Heart right ventricle (tissue), 16 donors: ENCODE measurements at regions of chr4 and their contacts with region 1.

Region 1: DNA sequence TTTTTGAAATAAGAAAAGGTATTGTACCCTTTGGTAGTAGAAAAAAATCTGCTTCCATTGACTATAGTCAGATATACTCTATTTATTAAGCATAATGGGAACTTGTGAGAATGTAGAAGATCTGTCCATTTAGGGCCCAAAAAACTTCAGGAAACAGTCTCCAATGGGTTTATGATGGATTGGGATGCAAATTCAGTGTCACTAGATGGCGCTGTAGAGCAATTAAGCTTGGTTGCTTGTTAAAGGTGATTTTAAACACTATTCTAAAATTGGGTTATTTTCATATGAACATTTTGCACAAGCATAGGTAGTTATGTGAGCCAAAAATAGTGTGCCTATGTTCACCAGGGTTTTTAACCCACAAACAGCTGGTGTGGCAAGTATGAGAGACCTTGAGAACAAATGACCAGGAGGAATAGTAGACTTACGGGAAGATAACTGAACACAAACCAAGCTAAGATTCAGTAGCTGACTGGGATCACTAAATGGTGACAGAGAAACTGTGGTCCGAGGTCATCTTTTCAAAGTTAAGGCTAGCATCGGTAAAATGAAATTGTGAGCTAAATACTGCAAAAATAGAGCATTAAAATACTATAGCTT is 80.3 kb upstream of the LSM6 start:
- DNase-seq: peak in 1 of 2 donors; percentile 27
- ATAC-seq: no peak
- H3K4me3 ChIP-seq: no peak overlapping the region
- H3K27ac ChIP-seq: no peak overlapping the region
- H3K4me1 ChIP-seq: no peaks in the 10 kb centered on the region
- H3K27me3 ChIP-seq: no peaks in the 10 kb centered on the region
- CTCF ChIP-seq: peak; percentile 33 to 75 (median 70)

Region 2: DNA sequence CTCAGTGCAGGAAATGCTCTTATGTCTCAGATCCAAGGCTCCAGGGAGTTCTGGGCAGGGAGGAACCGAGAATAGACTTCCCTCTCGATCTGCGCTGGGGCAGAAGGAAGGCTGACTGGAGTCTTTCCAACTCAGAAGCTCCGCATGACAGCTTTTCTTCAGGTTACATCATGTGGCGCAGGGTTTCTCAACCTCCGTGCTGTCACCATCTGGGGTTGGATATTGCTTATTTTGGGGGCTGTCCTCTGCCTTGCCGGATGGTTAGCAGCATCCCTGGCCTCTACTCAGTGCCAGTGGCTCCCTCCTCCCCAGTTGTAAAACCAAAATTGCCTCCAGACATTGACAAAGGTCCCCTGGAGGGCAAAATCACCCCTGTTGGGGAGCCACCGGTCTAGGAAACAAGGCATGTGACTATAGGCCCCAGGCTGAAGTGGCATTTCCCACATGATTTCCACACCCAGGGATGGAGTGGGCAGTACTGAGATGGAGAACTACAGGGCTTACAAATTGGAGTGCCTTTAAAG is 140.5 kb after region 1 on chr4:
- intact Hi-C with region 1: loop called in 1 of 10 experiments (anchors 10 kb)
- DNase-seq: no peak
- ATAC-seq: peak; percentile 53 to 70 (median 61)
- H3K4me3 ChIP-seq: no peak overlapping the region
- H3K27ac ChIP-seq: peak overlapping the region in 8 of 10 donors; percentile 7 to 66 (median 38)
- H3K4me1 ChIP-seq: peaks cover 0 to 38% (median 17%) of the 10 kb centered on the region in 9 donors
- H3K27me3 ChIP-seq: no peaks in the 10 kb centered on the region
- CTCF ChIP-seq: no peak

Region 3: DNA sequence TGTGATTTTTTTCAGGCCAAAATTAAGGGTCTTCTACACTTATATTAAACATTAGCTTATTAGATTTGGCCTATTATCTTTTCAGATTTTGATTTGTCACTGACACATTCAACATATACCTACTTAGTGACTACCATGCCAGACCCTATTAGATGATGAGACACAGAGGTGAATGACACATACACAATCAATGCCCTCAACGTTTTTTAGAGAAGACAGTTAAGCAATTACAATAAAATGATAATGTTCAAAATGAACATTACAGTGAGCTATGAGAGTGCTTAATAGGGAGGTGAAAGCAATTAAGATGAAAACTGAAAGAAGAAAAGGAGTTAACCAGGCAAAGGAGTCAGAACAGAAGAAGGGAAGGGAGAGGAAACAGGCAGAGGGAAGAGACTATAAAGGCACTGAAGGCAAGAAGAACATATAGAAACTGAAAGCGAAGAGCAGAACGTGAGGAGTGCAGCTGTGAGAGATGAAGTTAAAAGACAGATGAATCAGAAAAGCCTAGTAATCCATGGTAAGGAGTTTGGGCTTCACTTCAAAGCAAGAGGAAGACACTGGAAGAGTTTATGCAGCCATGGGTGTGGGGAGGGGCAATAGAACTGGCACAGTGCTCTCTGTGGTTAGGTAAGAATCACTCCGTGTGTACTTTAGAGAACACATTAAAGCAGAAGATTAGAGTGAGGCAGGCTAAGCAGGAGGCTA is 238.2 kb after region 1 on chr4:
- intact Hi-C with region 1: loop called in 4 of 10 experiments (anchors 2 to 10 kb)
- DNase-seq: no peak
- ATAC-seq: no peak
- H3K4me3 ChIP-seq: no peak overlapping the region
- H3K27ac ChIP-seq: no peak overlapping the region
- H3K4me1 ChIP-seq: peaks cover 0 to 49% (median 3%) of the 10 kb centered on the region in 9 donors
- H3K27me3 ChIP-seq: no peaks in the 10 kb centered on the region
- CTCF ChIP-seq: no peak

Region 4: GRCh38 chr4:146916479-146917076 is 821.4 kb after region 1 on chr4:
- intact Hi-C with region 1: loop called in 5 of 10 experiments (anchors 5 to 10 kb)
- DNase-seq: no peak
- ATAC-seq: no peak
- H3K4me3 ChIP-seq: no peak overlapping the region
- H3K27ac ChIP-seq: no peak overlapping the region
- H3K4me1 ChIP-seq: no peaks in the 10 kb centered on the region
- H3K27me3 ChIP-seq: peaks cover 0 to 45% (median 29%) of the 10 kb centered on the region in 7 donors
- CTCF ChIP-seq: peak; percentile 57 to 85 (median 75)

Region 5: GRCh38 chr4:147096667-147097604 is 1001.7 kb after region 1 on chr4:
- intact Hi-C with region 1: loop called in 1 of 10 experiments (anchors 5 kb)
- DNase-seq: no peak
- ATAC-seq: peak in 3 of 8 donors; percentile 22 to 65 (median 47)
- H3K4me3 ChIP-seq: no peak overlapping the region
- H3K27ac ChIP-seq: no peak overlapping the region
- H3K4me1 ChIP-seq: peaks cover 0 to 5% (median 0%) of the 10 kb centered on the region in 9 donors
- H3K27me3 ChIP-seq: no peaks in the 10 kb centered on the region
- CTCF ChIP-seq: peak; percentile 61 to 85 (median 71)